ENCODE measurements at regions of chr20 and their contacts with region 1.

Region 1: DNA sequence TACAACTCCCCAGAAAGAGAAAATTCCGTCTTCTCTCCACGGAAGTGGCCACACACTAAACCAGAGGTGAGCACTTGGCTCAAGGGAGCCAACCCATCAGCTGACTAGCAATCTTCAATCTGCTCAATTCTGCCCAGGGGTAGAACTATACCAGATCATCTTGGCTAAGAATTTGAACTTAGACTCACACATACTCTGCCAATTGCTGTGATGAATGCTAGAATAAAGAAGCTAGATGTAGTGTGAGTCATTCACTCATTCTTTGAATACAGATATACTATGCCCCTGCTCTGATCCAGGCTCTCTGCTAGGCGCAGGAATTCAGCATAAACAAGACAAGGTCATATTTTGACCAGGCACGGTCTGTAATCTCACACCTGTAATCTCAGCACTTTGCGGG is 147.9 kb upstream of the SHLD1 start:
- DNase-seq: no peak
- ATAC-seq: peak; percentile 3
- H3K4me3 ChIP-seq: peak overlapping the region; percentile 49
- H3K27ac ChIP-seq: peak overlapping the region; percentile 98
- H3K4me1 ChIP-seq: peaks cover 38% of the 10 kb centered on the region
- H3K27me3 ChIP-seq: no peaks in the 10 kb centered on the region
- CTCF ChIP-seq: no peak
- EP300 ChIP-seq: no peak
- POLR2A ChIP-seq: no peak
- RAD21 ChIP-seq: no peak

Region 2: DNA sequence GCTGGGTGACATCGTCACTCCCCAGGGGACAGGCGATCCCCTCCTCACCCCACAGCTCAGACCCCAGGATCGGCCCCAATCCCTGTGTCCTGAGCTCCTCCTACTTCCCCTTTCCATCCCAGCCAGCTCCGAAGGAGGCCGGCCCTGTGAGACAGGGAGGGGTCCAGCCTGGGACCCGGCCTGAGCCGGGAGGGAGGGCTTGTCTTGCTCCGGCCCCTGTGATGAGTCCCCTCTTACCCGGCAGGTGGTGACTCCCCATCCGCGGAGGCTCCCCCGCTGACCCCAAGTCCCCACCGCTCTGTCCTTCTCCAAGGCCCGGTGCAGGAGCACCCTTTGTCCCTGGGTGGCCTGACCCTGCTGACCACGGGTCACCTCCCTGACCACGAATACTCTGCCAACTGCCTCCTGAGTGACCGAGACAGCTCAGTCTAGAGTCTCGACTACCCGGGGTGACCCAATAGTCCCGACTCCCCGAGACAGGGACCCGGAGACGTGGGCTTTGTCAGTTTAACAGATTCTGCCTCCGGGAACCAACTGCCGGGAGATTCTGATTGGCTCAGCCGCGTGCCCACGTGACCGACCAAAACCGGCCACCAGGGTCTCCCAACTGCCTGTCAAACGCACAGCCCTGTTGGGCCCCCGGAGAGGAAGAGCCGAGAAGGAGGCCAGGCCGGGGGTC is 98.1 kb before region 1 on chr20:
- CTCF ChIA-PET with region 1: no interaction called
- POLR2A ChIA-PET with region 1: no interaction called
- RAD21 ChIA-PET with region 1: no interaction called
- SMC1A ChIA-PET with region 1: no interaction called
- in situ Hi-C with region 1: no loop called
- intact Hi-C with region 1: no loop called
- DNase-seq: no peak
- ATAC-seq: peak; percentile 53
- H3K4me3 ChIP-seq: peak overlapping the region; percentile 31; the same call in 1 of the 2 replicates
- H3K27ac ChIP-seq: no peak overlapping the region
- H3K4me1 ChIP-seq: no peaks in the 10 kb centered on the region
- H3K27me3 ChIP-seq: peaks cover 0 to 1% of the 10 kb centered on the region in 2 experiments; a peak in 1 of 4 replicates
- CTCF ChIP-seq: no peak
- EP300 ChIP-seq: no peak
- POLR2A ChIP-seq: no peak
- RAD21 ChIP-seq: no peak

Region 3: GRCh38 chr20:5522422-5522821 is 79.9 kb before region 1 on chr20:
- CTCF ChIA-PET with region 1: no interaction called
- POLR2A ChIA-PET with region 1: no interaction called
- RAD21 ChIA-PET with region 1: no interaction called
- SMC1A ChIA-PET with region 1: no interaction called
- in situ Hi-C with region 1: no loop called
- intact Hi-C with region 1: no loop called
- DNase-seq: no peak
- ATAC-seq: no peak
- H3K4me3 ChIP-seq: no peak overlapping the region
- H3K27ac ChIP-seq: no peak overlapping the region
- H3K4me1 ChIP-seq: no peaks in the 10 kb centered on the region
- H3K27me3 ChIP-seq: no peaks in the 10 kb centered on the region
- CTCF ChIP-seq: no peak
- EP300 ChIP-seq: no peak
- POLR2A ChIP-seq: no peak
- RAD21 ChIP-seq: no peak

Region 4: GRCh38 chr20:5586720-5587119 is 15.6 kb before region 1 on chr20:
- CTCF ChIA-PET with region 1: interaction called, 6 read pairs
- POLR2A ChIA-PET with region 1: interaction called, 8 read pairs
- RAD21 ChIA-PET with region 1: interaction called, 11 read pairs
- SMC1A ChIA-PET with region 1: interaction called, 38 read pairs
- in situ Hi-C with region 1: no loop called
- intact Hi-C with region 1: no loop called
- DNase-seq: no peak
- ATAC-seq: peak; percentile 56
- H3K4me3 ChIP-seq: no peak overlapping the region
- H3K27ac ChIP-seq: peak overlapping the region; percentile 44
- H3K4me1 ChIP-seq: peaks cover 44% of the 10 kb centered on the region
- H3K27me3 ChIP-seq: no peaks in the 10 kb centered on the region
- CTCF ChIP-seq: no peak
- EP300 ChIP-seq: no peak
- POLR2A ChIP-seq: no peak
- RAD21 ChIP-seq: no peak

Region 5: GRCh38 chr20:5674176-5674660 is 71.9 kb after region 1 on chr20:
- CTCF ChIA-PET with region 1: no interaction called
- POLR2A ChIA-PET with region 1: no interaction called
- RAD21 ChIA-PET with region 1: interaction called, 3 read pairs
- SMC1A ChIA-PET with region 1: no interaction called
- in situ Hi-C with region 1: no loop called
- intact Hi-C with region 1: loop called (anchors 2 kb)
- DNase-seq: peak; percentile 94
- ATAC-seq: peak; percentile 97
- H3K4me3 ChIP-seq: no peak overlapping the region
- H3K27ac ChIP-seq: no peak overlapping the region
- H3K4me1 ChIP-seq: peaks cover 21% of the 10 kb centered on the region
- H3K27me3 ChIP-seq: no peaks in the 10 kb centered on the region
- CTCF ChIP-seq: no peak
- EP300 ChIP-seq: no peak
- POLR2A ChIP-seq: no peak
- RAD21 ChIP-seq: no peak

Region 6: DNA sequence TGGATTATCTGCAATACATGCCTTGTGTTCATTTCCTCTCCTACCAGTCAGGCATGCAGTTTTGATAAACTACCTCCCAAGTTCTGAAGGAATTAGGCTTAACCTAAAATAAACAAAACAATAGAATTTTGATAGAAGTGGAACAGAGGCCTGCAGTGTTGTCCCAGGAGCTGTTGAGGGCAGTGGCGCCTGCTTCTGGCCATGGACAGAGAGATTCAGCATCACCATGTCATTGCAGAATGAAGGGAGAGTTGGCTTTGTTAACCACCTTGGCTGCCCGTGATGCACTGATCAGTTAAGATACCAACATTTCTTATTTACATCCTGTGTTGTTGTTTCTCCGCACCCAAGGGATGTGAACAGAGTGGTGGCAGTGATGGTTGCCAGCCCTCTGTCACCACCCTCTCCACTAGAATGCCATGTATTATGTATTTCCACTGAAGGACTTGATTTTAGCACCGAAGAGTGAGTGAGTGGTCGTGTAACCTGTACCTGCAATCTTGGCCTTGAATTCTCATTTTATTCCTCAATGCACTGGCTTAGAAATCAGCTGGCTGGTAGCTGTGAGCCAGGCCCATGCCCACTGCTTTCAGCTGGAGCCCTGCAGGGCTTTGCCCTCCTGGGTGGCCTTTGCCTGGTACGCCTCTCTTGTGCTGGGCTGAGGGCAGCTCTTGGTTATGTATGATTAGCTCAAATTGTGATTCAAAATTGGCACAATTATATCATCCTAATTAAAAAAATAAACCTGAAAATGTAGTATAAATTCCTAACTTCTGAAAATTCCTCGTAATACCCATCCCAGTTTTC is 204.3 kb after region 1 on chr20:
- CTCF ChIA-PET with region 1: no interaction called
- POLR2A ChIA-PET with region 1: no interaction called
- RAD21 ChIA-PET with region 1: no interaction called
- SMC1A ChIA-PET with region 1: no interaction called
- in situ Hi-C with region 1: no loop called
- intact Hi-C with region 1: no loop called
- DNase-seq: no peak
- ATAC-seq: no peak; the same call in 2 of the 3 replicates
- H3K4me3 ChIP-seq: no peak overlapping the region
- H3K27ac ChIP-seq: no peak overlapping the region
- H3K4me1 ChIP-seq: no peaks in the 10 kb centered on the region
- H3K27me3 ChIP-seq: no peaks in the 10 kb centered on the region
- CTCF ChIP-seq: no peak; a peak in 2 of 6 replicates
- EP300 ChIP-seq: no peak
- POLR2A ChIP-seq: no peak
- RAD21 ChIP-seq: peak; percentile 34; the same call in 1 of the 2 replicates

Measured in GM12878 (cell line).